B cell (primary cell): ENCODE measurements at regions of chr12 and their contacts with region 1.

Region 1: DNA sequence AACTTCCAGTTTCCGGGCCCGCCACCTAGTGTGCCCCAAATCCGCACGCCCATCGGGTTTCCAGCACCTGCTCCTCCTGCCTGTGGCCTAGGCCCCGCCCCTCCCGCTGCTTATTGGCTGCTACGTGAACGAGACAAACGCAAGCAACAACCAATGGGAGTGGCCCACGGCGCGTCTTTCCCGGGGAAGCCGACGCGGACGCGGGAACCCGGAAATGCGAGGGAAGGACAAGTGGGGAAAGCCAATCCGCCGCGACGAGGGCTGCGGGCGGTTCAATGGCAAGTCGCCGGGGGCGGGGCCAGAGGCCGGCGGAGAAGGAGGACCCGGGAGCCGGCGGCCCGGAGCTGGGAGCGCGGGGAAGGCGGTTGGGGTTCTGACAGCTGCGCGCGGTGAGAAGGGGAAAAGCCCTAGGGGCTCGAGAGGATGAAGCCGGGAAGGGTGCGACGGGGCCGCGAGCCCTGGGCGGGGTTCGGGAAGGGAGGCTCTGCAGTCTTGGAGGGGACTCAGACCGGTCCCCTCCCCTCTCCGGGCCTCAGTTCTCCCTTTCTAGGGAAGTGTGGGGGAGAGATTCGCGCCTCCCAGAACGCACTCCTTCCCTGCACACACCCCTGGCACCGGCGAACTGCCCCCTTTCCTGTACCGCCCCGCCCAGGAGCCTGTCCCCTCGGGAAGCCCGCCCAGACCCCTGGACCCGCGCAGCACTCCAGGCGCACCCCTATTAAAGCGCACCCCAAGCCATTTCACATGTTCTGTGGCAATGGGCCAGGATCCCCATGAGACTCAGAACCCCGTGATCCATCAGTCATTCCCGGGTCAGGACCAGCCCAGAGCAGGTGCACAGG is at the start of gene FICD:
- DNase-seq: peak; percentile 98
- ATAC-seq: peak; percentile 95
- H3K4me3 ChIP-seq: peak within 1 kb of the TSS; percentile 40 to 97 (median 93)
- H3K4me3 Mint-ChIP-seq: peak within 1 kb of the TSS; percentile 96
- H3K27ac ChIP-seq: peak within 1 kb of the TSS; percentile 58 to 81
- H3K27ac Mint-ChIP-seq: peak within 1 kb of the TSS; percentile 87
- H3K4me1 ChIP-seq: peaks cover 13 to 30% of the 10 kb centered on the region in 2 donors
- H3K4me1 Mint-ChIP-seq: peaks cover 37% of the 10 kb centered on the region
- H3K27me3 ChIP-seq: no peaks in the 10 kb centered on the region
- H3K27me3 Mint-ChIP-seq: no peaks in the 10 kb centered on the region
- CTCF ChIP-seq: no peak
- total RNA-seq, gene FICD: 9.1 and 9.7 TPM in 2 replicates

Region 2: DNA sequence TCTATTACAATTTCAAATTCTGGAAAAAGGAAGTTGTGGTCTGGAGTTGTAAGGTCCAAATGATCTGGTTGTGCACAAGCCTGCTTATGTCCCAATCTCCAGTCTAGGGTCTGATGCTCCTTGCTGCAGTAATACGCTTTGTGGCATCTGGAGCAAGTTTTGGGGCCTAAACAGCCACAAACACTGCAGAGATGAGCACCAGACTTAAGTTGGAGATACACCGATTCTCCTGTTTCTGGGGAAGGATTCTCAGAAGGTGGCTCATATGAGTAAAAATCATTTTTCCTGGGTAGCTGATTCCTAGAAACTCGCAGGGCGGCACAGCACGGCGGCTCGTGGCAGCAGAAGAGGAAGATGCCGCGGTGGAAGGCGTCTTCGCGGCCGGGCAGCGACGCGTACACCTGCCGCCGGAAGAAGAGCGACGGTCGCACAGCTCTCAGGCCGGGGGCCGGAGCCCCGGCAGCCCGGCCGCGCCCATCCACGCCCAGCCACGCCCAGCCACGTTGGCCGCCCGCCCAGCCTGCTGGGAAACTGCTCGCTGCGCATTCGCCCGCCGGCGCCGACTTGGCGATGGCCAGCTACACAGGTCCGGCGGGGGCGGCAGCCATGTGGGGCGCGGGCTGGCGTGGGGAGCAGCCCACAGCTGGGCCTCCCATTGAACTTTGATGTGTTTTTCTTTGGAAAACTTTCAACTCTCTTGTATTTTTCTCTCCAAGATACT is 611.7 kb before region 1 on chr12:
- CTCF ChIA-PET with region 1: no interaction called
- POLR2A ChIA-PET with region 1: no interaction called
- intact Hi-C with region 1: loop called (anchors 5 kb)
- DNase-seq: peak; percentile 73
- ATAC-seq: peak; percentile 97
- H3K4me3 ChIP-seq: peak overlapping the region in 4 of 5 experiments; percentile 18 to 51 (median 34)
- H3K4me3 Mint-ChIP-seq: peak overlapping the region; percentile 84
- H3K27ac ChIP-seq: no peak overlapping the region
- H3K27ac Mint-ChIP-seq: peak overlapping the region; percentile 77
- H3K4me1 ChIP-seq: peaks cover 7 to 13% of the 10 kb centered on the region in 2 donors
- H3K4me1 Mint-ChIP-seq: peaks cover 13% of the 10 kb centered on the region
- H3K27me3 ChIP-seq: peaks cover 0 to 43% (median 30%) of the 10 kb centered on the region in 4 experiments
- H3K27me3 Mint-ChIP-seq: peaks cover 47% of the 10 kb centered on the region
- CTCF ChIP-seq: no peak

Region 3: DNA sequence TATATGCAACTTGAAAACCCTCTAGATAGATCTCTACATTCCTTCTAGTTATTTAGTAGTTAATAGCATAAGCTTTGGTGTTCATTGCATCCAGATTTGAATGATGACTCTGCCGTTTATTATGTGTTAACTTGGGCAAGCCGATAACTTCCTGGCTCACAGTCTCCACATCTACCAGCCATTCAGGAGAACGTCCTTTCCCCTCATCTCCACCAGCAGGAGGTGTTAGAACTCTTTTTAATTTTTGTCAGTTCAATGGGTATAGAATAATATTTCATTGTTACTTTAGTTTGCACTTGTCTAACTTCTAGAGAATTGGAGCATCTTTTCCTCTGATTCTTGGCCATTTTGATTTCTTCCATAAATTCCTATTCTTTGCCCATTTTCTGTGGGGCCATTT is 416.1 kb before region 1 on chr12:
- CTCF ChIA-PET with region 1: interaction called, 30 read pairs
- POLR2A ChIA-PET with region 1: no interaction called
- intact Hi-C with region 1: no loop called
- DNase-seq: peak; percentile 46
- ATAC-seq: peak; percentile 49
- H3K4me3 ChIP-seq: no peak overlapping the region
- H3K4me3 Mint-ChIP-seq: no peak overlapping the region
- H3K27ac ChIP-seq: no peak overlapping the region
- H3K27ac Mint-ChIP-seq: no peak overlapping the region
- H3K4me1 ChIP-seq: no peaks in the 10 kb centered on the region
- H3K4me1 Mint-ChIP-seq: no peaks in the 10 kb centered on the region
- H3K27me3 ChIP-seq: no peaks in the 10 kb centered on the region
- H3K27me3 Mint-ChIP-seq: peaks cover 9% of the 10 kb centered on the region
- CTCF ChIP-seq: peak; percentile 65

Region 4: GRCh38 chr12:108547686-108548085 is 32.5 kb after region 1 on chr12:
- CTCF ChIA-PET with region 1: no interaction called
- POLR2A ChIA-PET with region 1: no interaction called
- intact Hi-C with region 1: no loop called
- DNase-seq: no peak
- ATAC-seq: no peak
- H3K4me3 ChIP-seq: no peak overlapping the region
- H3K4me3 Mint-ChIP-seq: no peak overlapping the region
- H3K27ac ChIP-seq: no peak overlapping the region
- H3K27ac Mint-ChIP-seq: no peak overlapping the region
- H3K4me1 ChIP-seq: peaks cover 0 to 7% of the 10 kb centered on the region in 2 donors
- H3K4me1 Mint-ChIP-seq: peaks cover 34% of the 10 kb centered on the region
- H3K27me3 ChIP-seq: no peaks in the 10 kb centered on the region
- H3K27me3 Mint-ChIP-seq: no peaks in the 10 kb centered on the region
- CTCF ChIP-seq: no peak

Region 5: DNA sequence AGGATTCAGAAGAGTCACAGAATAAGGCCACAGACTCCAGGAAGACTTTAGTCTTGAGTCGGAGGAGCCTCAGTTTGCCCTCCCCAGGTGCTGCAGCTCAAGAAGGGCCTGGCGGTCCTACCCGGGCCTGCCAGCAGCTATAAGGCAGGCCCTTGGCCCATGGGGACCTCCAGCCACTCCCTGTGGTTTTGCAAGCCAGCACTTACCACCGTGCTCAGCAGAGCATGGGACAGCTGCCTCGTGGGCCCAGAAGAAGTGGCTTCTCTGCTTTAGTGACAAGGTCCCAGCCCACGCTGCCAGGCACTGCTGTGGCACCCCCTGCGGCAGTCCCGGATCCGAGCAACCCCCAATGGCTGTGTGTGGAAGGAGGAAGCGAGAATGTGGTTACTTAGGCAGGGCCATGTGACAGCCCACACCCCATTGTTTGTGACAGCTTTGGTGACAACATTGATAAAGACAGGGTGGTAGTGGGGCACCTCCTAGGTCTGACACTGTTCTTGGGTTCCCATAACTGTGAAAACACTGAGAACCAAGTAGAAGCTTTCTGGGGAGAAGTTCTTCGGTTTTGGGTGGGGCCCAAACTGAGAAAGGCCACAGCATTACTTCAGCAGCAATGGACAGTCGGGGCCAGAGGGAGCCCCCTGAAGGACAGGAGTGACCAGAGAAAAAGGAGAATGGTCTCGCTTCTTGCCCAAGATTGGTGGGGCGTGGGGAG is 118.5 kb after region 1 on chr12 and contains the start of gene SELPLG:
- CTCF ChIA-PET with region 1: no interaction called
- POLR2A ChIA-PET with region 1: no interaction called
- intact Hi-C with region 1: loop called (anchors 2 kb)
- DNase-seq: peak; percentile 98
- ATAC-seq: peak; percentile 75
- H3K4me3 ChIP-seq: peak within 1 kb of the TSS; percentile 62 to 87 (median 78)
- H3K4me3 Mint-ChIP-seq: peak within 1 kb of the TSS; percentile 99
- H3K27ac ChIP-seq: peak within 1 kb of the TSS; percentile 92 to 95
- H3K27ac Mint-ChIP-seq: peak within 1 kb of the TSS; percentile 100
- H3K4me1 ChIP-seq: peaks cover 78 to 88% of the 10 kb centered on the region in 2 donors
- H3K4me1 Mint-ChIP-seq: peaks cover 89% of the 10 kb centered on the region
- H3K27me3 ChIP-seq: no peaks in the 10 kb centered on the region
- H3K27me3 Mint-ChIP-seq: no peaks in the 10 kb centered on the region
- CTCF ChIP-seq: peak; percentile 41
- total RNA-seq, gene SELPLG: 6.1 and 6.2 TPM in 2 replicates

Region 6: GRCh38 chr12:108856428-108857157 is 341.4 kb after region 1 on chr12:
- CTCF ChIA-PET with region 1: no interaction called
- POLR2A ChIA-PET with region 1: no interaction called
- intact Hi-C with region 1: loop called (anchors 1 kb)
- DNase-seq: peak; percentile 59
- ATAC-seq: peak; percentile 2
- H3K4me3 ChIP-seq: peak overlapping the region; percentile 43 to 76 (median 71)
- H3K4me3 Mint-ChIP-seq: peak overlapping the region; percentile 99
- H3K27ac ChIP-seq: peak overlapping the region in 1 of 2 donors; percentile 56
- H3K27ac Mint-ChIP-seq: peak overlapping the region; percentile 96
- H3K4me1 ChIP-seq: peaks cover 29 to 44% of the 10 kb centered on the region in 2 donors
- H3K4me1 Mint-ChIP-seq: peaks cover 52% of the 10 kb centered on the region
- H3K27me3 ChIP-seq: peaks cover 0 to 4% (median 0%) of the 10 kb centered on the region in 4 experiments
- H3K27me3 Mint-ChIP-seq: no peaks in the 10 kb centered on the region
- CTCF ChIP-seq: no peak

Region 7: DNA sequence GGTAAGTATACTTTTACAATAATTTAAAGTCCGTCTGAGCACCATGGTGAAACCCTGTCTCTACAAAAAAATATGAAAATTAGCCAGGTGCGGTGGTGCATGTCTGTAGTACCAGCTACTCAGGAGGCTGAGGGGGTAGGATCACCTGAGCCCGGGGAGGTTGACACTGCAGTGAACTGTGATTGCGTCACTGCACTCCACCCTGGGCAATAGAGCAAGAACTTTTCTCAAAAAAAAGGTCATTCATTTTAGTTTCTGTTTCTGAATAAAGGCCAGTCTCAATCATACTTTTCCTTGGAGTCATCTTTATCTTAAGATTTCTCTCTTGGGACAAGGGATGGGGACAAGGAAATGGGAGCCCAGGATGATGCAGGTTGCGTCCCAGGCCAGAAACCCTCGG is 1496.9 kb after region 1 on chr12:
- CTCF ChIA-PET with region 1: no interaction called
- POLR2A ChIA-PET with region 1: no interaction called
- intact Hi-C with region 1: no loop called
- DNase-seq: peak; percentile 94
- ATAC-seq: peak; percentile 95
- H3K4me3 ChIP-seq: peak overlapping the region in 3 of 5 experiments; percentile 40 to 53 (median 43)
- H3K4me3 Mint-ChIP-seq: peak overlapping the region; percentile 91
- H3K27ac ChIP-seq: peak overlapping the region; percentile 89 to 97
- H3K27ac Mint-ChIP-seq: peak overlapping the region; percentile 95
- H3K4me1 ChIP-seq: peaks cover 57 to 69% of the 10 kb centered on the region in 2 donors
- H3K4me1 Mint-ChIP-seq: peaks cover 64% of the 10 kb centered on the region
- H3K27me3 ChIP-seq: no peaks in the 10 kb centered on the region
- H3K27me3 Mint-ChIP-seq: no peaks in the 10 kb centered on the region
- CTCF ChIP-seq: no peak